Left ventricle myocardium inferior (tissue), 1 donor: ENCODE measurements at regions of chr16 and their contacts with region 1.

Region 1: DNA sequence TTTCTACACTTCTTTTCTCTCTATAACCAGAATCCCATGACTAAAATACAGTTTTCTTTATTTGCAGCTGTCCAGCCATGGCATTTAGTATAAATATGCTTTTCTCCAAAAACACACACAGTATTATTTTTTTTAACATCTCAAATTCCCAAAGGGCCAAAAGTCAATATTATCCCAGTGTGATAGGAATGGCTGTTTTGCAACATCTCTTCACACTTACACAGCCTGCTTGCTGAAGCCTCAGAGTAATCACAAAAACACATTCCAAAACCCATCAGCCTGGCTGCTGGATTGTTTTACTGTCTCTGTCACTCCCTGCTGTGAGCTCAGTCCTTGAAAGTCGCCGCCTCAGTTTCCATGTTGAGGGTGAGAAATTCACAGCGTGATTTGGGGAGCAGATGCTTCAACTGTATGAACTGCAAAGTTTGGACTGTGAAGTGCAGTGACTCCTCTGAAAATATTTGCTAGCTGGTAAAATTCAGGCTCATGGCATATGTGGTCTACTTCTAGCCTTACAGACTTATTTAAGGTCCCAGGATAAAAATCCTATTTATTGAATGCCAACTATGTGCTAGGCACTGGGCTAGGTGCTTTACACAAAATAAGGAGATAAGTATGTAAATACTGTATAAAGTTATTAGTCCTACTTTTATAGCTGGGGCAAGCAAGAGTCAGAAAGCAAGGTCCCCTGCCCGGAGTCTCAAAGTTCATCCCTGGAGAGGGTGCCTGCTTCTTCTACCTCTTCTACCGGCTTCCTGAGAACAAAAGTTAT is 116.5 kb downstream of the SOCS1 start:
- DNase-seq: no peak
- H3K4me3 ChIP-seq: no peak overlapping the region
- H3K27ac ChIP-seq: peak overlapping the region; percentile 50
- H3K4me1 ChIP-seq: peaks cover 84% of the 10 kb centered on the region
- H3K27me3 ChIP-seq: no peaks in the 10 kb centered on the region
- CTCF ChIP-seq: no peak

Region 2: GRCh38 chr16:11107780-11108465 is 31.6 kb before region 1 on chr16:
- intact Hi-C with region 1: loop called (anchors 2 kb)
- DNase-seq: no peak
- H3K4me3 ChIP-seq: no peak overlapping the region
- H3K27ac ChIP-seq: no peak overlapping the region
- H3K4me1 ChIP-seq: peaks cover 49% of the 10 kb centered on the region
- H3K27me3 ChIP-seq: no peaks in the 10 kb centered on the region
- CTCF ChIP-seq: no peak

Region 3: GRCh38 chr16:11396241-11397048 is 256.9 kb after region 1 on chr16:
- intact Hi-C with region 1: no loop called
- DNase-seq: peak; percentile 67
- H3K4me3 ChIP-seq: no peak overlapping the region
- H3K27ac ChIP-seq: peak overlapping the region; percentile 69
- H3K4me1 ChIP-seq: peaks cover 5% of the 10 kb centered on the region
- H3K27me3 ChIP-seq: peaks cover 9% of the 10 kb centered on the region
- CTCF ChIP-seq: no peak